GM10248 (cell line): ENCODE measurements at regions of chr1 and their contacts with region 1.

Region 1: DNA sequence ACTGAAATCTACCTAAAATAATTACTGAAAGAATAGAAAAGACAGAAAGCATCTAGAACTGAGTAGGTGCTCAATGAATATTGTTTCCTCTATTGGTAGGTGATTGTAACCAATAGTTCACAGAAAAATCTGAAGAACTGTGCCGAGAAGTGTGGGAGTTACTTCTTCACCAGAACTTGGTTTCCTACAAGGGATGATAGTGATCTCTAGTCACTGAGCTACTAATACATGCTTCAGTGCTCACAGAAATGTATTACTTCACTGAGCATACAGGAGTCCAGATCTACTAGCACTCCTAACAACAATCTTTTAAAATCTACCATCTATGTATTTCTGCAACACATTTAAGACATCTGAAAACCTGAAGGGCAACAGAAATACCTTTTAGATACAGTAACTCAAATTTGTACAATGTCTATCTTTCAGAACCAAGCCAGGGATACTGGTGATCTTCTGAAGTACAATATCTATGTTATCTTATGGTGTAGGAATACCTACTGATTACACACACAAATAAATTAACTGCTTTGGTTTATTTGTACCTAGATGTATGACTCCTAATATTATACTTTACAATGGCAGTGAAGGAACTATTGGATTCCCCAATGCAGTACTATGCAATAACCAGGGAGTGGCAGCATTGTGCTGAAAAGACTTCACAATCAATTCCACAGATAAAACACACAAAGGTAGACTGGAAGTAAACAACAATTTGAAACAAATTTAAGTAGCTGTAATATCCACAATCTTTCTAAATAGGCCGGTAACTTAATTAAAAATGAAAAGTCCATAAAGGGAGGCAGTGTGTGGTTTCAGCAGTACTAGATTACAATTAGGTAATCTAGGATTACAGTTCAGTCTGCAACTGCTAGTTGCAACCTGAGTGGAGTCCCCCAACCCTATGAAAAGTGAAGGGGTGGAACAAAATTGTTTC is 243.0 kb downstream of the SLC45A1 start:
- DNase-seq: peak; percentile 37
- CTCF ChIP-seq: peak; percentile 86

Region 2: GRCh38 chr1:8423650-8424538 is 137.0 kb before region 1 on chr1:
- CTCF ChIA-PET with region 1: no interaction called
- POLR2A ChIA-PET with region 1: no interaction called
- DNase-seq: peak; percentile 51
- CTCF ChIP-seq: no peak

Region 3: DNA sequence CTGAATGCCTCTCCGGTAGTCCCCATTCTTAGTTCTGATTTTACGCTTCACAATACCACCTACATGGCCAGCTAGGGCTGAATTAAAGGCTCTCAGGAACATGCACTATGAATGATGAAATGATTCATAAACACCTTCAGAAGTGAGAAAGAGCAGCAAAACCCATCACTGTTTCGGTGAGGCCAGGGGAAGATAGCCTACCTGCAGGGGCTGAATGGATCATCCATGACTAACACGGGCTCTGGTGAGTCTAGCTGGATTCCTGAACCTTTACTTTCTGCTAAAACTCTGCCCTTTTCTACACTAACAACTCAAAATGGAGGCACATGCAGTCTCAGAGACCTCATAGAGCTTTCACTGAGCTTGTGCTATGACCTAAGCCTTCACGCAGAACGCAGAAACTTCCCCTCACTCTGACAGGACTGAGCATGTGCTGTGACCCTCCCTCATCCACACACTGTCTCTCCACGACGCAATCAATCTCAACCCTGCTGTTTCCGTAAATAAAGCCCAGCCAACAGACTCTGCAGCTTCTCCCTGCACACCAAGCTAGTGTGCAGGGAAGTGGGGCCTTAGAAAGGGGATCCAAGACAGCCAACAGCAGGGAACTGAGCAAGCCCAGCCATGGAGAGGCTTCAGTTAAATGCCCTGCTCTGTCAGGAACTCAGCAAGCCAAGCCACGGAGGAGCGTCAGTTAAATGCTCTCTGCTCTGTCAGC is 35.2 kb before region 1 on chr1:
- CTCF ChIA-PET with region 1: interaction called, 11 read pairs
- POLR2A ChIA-PET with region 1: no interaction called
- DNase-seq: peak; percentile 42
- CTCF ChIP-seq: no peak

Region 4: DNA sequence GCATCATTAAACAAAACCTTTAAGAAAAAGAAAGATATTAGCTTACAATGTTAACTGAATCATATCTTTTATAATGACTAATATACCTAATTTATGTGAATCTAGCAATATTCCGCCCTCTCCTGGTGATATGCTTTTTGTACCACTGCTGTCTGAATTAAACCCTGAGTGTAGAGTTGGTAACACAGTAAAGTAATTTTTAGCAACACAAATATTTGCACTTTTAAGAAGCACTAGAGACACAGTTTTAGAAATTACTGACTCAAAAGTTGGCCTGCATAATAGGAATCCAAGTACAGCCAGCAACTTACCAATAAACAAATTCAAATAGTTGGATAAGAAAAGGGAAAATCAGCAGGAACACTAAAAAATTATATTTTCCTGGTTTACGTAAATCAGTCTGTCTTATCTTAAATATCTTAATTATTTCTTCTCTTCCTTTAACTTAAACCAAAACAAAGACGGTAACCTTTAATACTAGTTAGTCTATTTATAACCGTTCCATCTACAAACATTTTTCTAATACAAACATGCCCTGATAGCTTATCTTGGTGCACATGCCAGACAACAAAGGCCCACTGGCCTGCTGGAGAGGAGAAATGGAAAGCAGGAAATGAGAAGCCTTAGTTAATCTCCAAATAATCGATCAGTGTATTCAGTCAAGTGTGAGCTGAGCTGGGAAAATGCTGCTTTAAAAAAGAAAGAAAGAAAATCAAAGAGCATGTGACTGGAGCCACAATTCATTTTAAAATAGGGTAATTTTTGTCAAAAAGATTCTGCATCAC is 10.5 kb after region 1 on chr1:
- CTCF ChIA-PET with region 1: interaction called, 35 read pairs
- POLR2A ChIA-PET with region 1: no interaction called
- DNase-seq: no peak
- CTCF ChIP-seq: no peak

Region 5: GRCh38 chr1:8586438-8586837 is 25.6 kb after region 1 on chr1:
- CTCF ChIA-PET with region 1: interaction called, 11 read pairs
- POLR2A ChIA-PET with region 1: no interaction called
- DNase-seq: no peak
- CTCF ChIP-seq: no peak

Region 6: DNA sequence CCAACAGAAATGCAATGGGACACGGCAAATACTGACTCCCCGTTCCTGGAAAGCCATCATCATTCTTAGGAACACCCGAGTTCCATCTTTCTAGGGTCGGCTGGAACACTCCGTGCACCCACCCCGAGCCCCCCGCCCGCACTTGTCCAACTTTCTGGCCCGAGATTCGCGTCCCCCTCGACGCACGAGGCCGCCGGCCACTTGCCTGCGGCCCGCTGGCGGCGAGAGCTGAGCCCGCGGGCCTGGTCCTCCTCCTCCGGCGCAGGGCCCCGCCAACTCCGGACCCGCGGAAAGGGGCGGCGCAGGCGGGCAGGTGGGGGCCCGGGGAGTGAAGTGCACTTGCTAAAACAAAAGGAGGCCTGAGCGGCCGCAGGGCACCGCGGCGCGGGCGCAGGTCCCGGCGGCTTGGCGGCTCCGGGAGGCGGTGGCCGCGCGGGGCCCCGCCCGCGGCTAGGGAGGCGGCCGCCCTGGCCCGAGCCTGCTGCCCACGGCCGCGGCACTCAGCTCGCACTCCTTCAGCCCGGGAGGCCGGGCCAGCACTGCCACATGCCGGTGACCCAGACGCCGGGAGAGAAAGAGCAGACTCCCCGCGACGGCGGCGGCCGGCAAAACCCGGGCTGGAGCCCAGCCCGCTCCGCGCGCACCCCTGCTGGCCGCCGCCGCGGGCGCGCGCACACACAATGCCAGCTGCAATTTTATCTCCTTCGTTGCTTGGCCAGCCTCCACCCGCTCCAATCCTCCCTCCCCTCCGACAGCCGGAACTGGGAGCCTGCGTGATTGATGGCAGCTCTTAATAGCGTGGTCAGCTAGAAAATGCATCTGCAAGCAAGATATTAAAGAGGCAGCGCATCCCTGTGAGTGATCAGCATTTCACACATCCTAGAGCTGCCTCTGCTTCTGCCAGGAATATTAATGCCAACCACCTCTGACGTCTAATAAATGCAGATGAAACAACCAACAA is 142.3 kb after region 1 on chr1:
- CTCF ChIA-PET with region 1: interaction called, 15 read pairs
- POLR2A ChIA-PET with region 1: no interaction called
- DNase-seq: peak; percentile 88
- CTCF ChIP-seq: peak; percentile 39